HEK293T (cell line): ENCODE measurements at regions of chr6 and their contacts with region 1.

Region 1: GRCh38 chr6:150072201-150072600 is 3.3 kb upstream of the ULBP3 start:
- DNase-seq: peak; percentile 39

Region 2: DNA sequence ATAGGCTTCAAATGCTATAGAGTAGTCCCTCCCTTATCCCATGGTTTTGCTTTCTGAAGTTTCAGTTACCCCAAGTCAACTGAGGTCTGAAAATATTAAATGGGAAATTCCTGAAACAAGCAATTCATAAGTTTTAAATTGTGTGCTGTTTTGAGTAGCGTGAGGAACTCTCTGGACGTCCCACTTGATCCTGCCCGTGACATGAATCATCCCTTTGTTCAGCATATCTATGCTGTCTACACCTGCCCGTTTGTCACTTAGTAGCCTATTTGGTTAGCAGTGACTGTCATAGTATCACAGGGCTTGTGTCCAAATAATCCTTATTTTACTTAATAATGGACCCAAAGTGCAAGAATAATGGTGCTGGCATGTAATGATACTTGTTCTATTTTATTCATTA is 317.7 kb before region 1 on chr6:
- CTCF ChIA-PET with region 1: interaction called, 11 read pairs
- POLR2A ChIA-PET with region 1: no interaction called
- DNase-seq: no peak

Region 3: DNA sequence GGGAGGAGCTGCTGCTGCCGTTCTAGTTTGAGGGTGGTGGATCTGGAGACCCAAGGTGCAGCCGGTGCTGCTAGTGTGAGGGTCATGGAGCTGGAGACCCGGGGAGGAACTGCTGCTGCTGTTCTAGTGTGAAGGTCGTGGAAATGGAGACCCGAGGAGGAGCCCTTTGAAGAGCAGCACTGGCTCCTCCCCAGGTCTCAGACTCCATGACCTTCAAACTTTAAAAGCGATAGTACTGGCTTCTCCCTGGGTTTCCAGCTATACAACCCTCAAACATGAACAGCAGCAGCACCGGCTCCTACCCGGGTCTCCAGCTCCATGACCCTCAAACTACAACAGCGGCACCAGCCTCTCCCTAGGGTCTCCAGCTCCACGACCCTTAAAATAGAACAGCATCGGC is 18.8 kb before region 1 on chr6:
- CTCF ChIA-PET with region 1: interaction called, 25 read pairs
- POLR2A ChIA-PET with region 1: interaction called, 9 read pairs
- DNase-seq: no peak

Region 4: GRCh38 chr6:150195996-150196417 is 123.8 kb after region 1 on chr6:
- CTCF ChIA-PET with region 1: no interaction called
- POLR2A ChIA-PET with region 1: no interaction called
- DNase-seq: peak; percentile 78

Region 5: GRCh38 chr6:150267686-150268561 is 195.7 kb after region 1 on chr6:
- CTCF ChIA-PET with region 1: no interaction called
- POLR2A ChIA-PET with region 1: no interaction called
- DNase-seq: no peak